HepG2 (cell line): ENCODE measurements at regions of chr15 and their contacts with region 1.

Region 1: GRCh38 chr15:59532770-59533379 is 78.7 kb upstream of the GCNT3 start:
- DNase-seq: peak; percentile 41
- ATAC-seq: 0 out of 3 replicates have a peak, but pooled peaks have one; percentile 26
- H3K4me3 ChIP-seq: no peak overlapping the region
- H3K27ac ChIP-seq: no peak overlapping the region
- H3K4me1 ChIP-seq: peaks cover 20% of the 10 kb centered on the region
- H3K27me3 ChIP-seq: peaks cover 2 to 8% of the 10 kb centered on the region in 2 experiments; a peak in 4 of 5 replicates
- CTCF ChIP-seq: peak; percentile 79
- EP300 ChIP-seq: no peak
- POLR2A ChIP-seq: no peak
- RAD21 ChIP-seq: peak; percentile 82

Region 2: DNA sequence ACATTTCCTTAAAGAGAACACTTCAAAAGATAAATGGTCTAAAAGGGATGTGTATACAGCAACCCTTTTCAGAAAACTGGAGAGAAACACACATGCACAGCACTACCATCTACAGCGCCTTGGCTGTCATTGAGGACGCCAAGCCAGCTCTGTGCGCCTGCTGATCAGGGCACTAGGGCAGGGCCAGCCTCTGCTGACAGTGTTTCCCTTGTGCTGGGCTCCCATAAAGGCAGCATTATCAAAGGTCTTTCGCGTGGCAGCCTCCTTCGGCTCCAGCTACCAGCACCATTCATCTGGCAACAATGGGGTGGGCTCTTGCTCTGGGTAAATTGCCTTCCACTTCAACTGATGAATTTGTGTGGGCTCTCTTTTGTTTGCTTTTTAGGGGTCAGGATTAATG is 272.8 kb before region 1 on chr15:
- CTCF ChIA-PET with region 1: no interaction called
- POLR2A ChIA-PET with region 1: no interaction called
- in situ Hi-C with region 1: no loop called
- intact Hi-C with region 1: no loop called
- DNase-seq: no peak
- ATAC-seq: no peak
- H3K4me3 ChIP-seq: no peak overlapping the region
- H3K27ac ChIP-seq: no peak overlapping the region
- H3K4me1 ChIP-seq: peaks cover 44% of the 10 kb centered on the region
- H3K27me3 ChIP-seq: no peaks in the 10 kb centered on the region
- CTCF ChIP-seq: no peak
- EP300 ChIP-seq: no peak
- POLR2A ChIP-seq: no peak
- RAD21 ChIP-seq: no peak

Region 3: GRCh38 chr15:59562448-59563186 is 29.7 kb after region 1 on chr15:
- CTCF ChIA-PET with region 1: interaction called, 3 read pairs
- POLR2A ChIA-PET with region 1: no interaction called
- in situ Hi-C with region 1: no loop called
- intact Hi-C with region 1: loop called (anchors 2 kb)
- DNase-seq: no peak
- ATAC-seq: no peak
- H3K4me3 ChIP-seq: no peak overlapping the region
- H3K27ac ChIP-seq: no peak overlapping the region
- H3K4me1 ChIP-seq: 0 out of 2 replicates have a peak, but pooled peaks cover 5% of the 10 kb centered on the region
- H3K27me3 ChIP-seq: no peaks in the 10 kb centered on the region; a peak in 1 of 5 replicates
- CTCF ChIP-seq: no peak
- EP300 ChIP-seq: no peak
- POLR2A ChIP-seq: no peak
- RAD21 ChIP-seq: no peak

Region 4: DNA sequence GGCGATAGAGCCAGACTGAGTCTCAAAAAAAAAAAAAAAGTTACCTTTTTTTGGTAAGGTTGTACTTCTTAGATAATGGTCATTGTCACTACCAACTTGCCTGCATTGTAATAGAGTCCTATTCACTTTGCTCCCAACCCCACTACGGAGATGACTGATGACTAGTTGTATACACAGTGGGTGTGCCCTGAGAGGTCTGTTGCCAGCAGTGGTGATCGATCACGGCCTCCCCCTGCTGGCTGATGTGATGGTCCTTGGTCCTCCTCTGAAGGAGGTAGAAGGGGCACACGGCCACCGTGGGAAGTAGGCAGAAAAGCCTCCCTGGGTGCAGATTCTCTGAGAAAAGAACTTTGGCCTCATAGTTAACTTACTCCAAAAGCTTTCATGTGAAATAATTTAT is 89.4 kb after region 1 on chr15:
- CTCF ChIA-PET with region 1: interaction called, 72 read pairs
- POLR2A ChIA-PET with region 1: no interaction called
- in situ Hi-C with region 1: no loop called
- intact Hi-C with region 1: loop called (anchors 1 kb)
- DNase-seq: peak; percentile 79
- ATAC-seq: peak; percentile 99
- H3K4me3 ChIP-seq: no peak overlapping the region
- H3K27ac ChIP-seq: no peak overlapping the region
- H3K4me1 ChIP-seq: no peaks in the 10 kb centered on the region
- H3K27me3 ChIP-seq: no peaks in the 10 kb centered on the region
- CTCF ChIP-seq: peak; percentile 89
- EP300 ChIP-seq: no peak
- POLR2A ChIP-seq: no peak
- RAD21 ChIP-seq: peak; percentile 80